ENCODE measurements at regions of chr15 and their contacts with region 1.

Region 1: DNA sequence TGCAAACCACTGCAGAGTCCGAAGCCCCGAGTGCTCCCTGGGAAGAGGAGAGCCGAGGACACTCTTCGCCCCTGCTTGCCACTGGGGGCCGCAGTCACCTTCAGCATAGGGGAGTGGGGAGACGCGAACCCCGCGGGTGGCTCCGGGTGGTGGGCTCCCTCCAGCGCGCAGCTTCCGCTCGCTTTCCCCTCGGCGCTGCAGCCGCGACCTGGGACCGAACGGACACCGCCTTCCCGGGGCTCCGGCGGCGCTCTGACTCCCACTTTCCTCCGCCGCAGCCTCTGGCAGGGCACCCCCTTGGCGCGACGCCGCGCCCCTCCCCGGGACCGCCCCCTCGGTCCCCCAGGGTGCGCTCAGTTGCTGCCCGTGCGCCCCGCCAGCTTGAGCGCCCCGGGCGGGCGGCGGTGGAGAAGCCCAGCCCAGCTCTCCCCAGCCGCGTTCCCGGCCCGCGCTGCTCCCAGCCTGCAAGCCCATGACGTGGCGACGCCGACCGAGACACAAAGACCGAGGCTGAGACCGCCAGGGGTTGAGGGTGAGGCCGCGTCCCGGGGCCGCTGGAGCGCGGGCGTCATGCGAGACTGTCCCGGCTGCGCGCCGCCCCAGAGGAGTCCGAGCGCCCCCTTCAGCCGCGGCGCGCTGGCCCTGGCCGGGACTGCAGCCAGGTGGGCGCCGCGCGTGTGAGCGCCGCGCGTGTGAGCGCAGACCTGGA is at the start of gene MINAR1:
- DNase-seq: peak in 1 of 2 experiments; percentile 61
- H3K4me3 ChIP-seq: peak within 1 kb of the TSS; percentile 29 to 68 (median 46)
- H3K27ac ChIP-seq: no peak within 1 kb of the TSS
- H3K4me1 ChIP-seq: peaks cover 0 to 11% (median 6%) of the 10 kb centered on the region in 4 experiments; a peak in 6 of 7 replicates
- H3K27me3 ChIP-seq: peaks cover 34 to 57% (median 49%) of the 10 kb centered on the region in 4 experiments
- CTCF ChIP-seq: peak; percentile 6 to 40 (median 33); a peak in 3 of 4 replicates
- EP300 ChIP-seq: no peak
- POLR2A ChIP-seq: no peak
- RAD21 ChIP-seq: peak; percentile 19 to 48; a peak in 3 of 4 replicates
- total RNA-seq, gene MINAR1: 0.59 and 0.67 TPM in 2 replicates

Region 2: DNA sequence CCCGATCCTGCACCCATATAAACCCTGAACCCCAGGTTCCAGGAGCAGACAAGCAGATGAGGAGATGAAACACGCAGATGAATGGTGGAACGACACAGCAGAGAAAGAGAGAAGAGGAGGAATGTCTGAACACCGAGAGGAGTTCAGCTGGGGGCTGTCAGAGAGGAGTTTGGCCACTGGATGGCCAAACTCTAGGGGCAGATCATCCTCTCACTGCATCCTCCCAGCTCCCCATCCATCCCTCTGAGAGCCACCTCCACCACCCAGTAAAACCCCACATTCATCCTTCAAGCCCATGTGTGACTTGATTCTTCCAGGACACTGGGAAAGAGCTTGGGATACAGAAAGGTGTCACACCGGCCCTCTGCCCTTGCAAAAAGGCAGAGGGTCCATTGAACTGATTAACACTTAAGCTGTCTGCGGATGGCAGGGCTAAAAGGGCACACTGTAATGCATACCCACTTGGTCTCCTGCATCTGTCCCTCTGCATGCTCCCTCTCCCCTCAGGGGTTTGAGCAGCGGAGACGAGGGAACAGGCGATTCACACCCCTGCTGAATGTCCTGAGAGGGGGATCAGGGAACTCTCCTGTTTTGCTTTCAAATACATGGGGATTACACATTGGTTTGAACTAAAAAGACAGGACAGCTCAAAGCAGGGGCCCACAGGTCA is 67.1 kb before region 1 on chr15:
- CTCF ChIA-PET with region 1: interaction called, 11 read pairs
- POLR2A ChIA-PET with region 1: no interaction called
- DNase-seq: no peak
- H3K4me3 ChIP-seq: no peak overlapping the region
- H3K27ac ChIP-seq: no peak overlapping the region
- H3K4me1 ChIP-seq: peaks cover 0 to 7% (median 3%) of the 10 kb centered on the region in 4 experiments; a peak in 5 of 7 replicates
- H3K27me3 ChIP-seq: no peaks in the 10 kb centered on the region; a peak in 1 of 7 replicates
- CTCF ChIP-seq: peak; percentile 36 to 58 (median 52); a peak in 3 of 4 replicates
- EP300 ChIP-seq: no peak
- POLR2A ChIP-seq: no peak
- RAD21 ChIP-seq: peak; percentile 19 to 32; a peak in 2 of 4 replicates

Region 3: DNA sequence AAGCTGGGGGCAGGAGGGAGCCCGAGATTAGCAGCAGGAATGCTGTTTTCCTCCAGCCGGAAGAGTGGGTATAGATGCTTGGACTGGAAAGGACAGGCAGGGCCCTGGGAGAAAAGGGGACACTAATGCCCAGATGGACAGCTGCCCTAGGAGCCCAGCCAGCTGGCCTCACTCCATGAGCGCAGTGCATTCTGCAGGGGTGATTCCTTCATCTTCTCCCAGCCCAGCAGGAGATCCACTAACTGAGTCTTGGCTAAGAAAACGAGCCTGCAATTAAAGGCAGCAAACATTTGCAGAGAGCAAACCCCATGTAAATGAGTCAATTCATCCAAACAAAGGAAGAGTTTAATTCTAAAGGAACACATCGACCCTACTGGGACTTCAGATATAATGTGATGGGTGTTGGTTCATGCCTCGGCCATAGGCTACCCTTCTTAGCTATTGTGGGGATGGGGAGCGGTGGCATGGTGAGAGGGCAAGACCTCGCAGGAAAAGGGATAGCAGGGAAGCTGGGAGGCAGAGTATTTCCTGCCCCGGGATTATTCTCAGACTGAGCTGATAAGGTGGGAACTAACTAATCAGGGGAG is 13.0 kb before region 1 on chr15:
- CTCF ChIA-PET with region 1: interaction called, 39 read pairs
- POLR2A ChIA-PET with region 1: interaction called, 3 read pairs
- DNase-seq: no peak
- H3K4me3 ChIP-seq: no peak overlapping the region
- H3K27ac ChIP-seq: no peak overlapping the region
- H3K4me1 ChIP-seq: peaks cover 3 to 5% (median 4%) of the 10 kb centered on the region in 4 experiments; a peak in 5 of 7 replicates
- H3K27me3 ChIP-seq: no peaks in the 10 kb centered on the region
- CTCF ChIP-seq: no peak
- EP300 ChIP-seq: no peak
- POLR2A ChIP-seq: no peak
- RAD21 ChIP-seq: no peak